ENCODE measurements at regions of chr6 and their contacts with region 1.

Region 1: DNA sequence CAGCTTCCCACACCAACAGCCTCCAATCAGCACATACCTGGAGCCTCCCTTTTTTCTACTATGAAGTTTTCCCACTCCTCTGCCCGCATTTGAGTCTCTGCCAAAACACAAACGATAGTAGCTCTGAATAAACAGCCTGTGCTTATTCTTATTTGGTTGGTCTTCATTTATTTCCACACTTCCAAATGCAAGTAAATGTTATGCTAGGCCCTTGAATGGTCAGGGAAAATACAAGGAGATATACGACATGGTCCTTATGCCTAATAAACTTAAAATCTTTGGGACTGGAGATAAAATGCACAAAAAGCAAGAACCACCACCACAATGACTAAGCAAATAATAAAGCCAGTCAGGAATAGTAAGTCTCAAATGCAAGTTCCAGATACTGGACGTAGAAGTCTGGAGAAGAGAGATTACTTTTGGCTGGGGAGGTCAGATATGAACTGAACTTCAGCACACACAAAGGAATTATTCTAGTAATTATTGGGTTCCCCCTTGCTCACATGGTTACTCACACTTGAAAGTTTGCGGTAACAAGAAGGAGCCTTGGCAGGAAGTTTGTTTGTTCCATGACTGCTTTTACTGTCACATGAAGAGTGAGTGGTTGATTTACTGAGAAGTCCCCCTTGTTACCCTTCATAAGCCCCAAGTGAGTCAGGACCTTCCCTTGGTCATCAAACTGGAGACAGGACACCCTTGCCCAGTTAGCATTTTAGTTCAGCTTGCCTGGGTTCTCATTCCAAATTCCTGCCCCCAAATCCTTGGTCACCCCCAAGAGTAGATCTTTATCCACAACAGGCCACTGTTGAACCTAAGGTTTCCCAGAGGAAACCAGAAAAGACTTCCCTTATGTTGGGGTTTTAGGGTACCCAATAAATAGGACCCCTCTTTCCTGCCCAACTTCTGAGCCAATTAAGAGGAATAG is 511.2 kb upstream of the JARID2 start:
- DNase-seq: peak; percentile 58
- H3K4me3 Mint-ChIP-seq: peak overlapping the region; percentile 36
- H3K27ac Mint-ChIP-seq: peak overlapping the region; percentile 94
- H3K4me1 Mint-ChIP-seq: peaks cover 91% of the 10 kb centered on the region
- H3K27me3 Mint-ChIP-seq: no peaks in the 10 kb centered on the region

Region 2: DNA sequence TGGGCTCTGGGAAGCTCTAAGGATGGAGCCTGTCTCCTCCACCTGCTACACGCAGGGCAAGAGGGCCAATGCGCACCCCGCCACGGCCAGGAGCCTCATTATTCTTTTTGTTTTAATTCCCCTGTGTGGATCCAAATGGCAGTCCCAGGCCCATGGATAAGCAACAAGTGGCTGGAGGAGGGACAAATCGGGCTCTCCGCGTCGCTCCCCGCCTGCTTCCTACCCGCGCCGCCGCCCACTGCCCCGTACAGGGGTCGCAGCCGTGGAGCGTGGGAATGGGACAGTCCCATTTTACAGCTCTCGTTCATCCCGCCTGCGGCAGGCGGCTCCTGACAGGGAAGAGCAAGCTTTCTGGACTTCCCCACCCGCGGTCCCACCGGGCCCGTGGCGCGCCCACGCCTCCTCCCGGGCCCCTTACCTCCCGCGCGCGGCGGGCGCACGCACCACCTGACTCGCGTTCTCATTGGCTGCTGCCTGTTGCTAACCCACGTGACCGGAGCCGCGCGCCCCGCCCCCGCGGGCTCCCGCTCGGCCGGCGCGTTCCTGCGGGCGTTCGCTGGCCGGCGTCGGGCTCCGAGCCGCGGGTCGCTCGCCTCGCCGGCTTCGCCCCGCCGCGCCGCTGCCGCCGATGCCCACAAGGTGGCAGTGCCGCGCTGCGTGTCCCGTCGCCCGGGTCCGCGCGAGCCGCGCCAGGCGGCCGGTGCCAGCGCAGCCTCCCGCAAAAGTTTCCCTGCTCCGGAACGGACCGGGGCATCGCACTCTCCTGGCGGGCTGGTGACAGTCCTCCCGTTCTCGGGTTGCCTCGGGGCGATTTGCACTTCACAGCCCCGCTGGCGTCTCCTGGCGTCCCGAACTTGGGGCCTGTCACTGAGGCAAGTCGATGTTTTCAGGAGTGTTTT is 523.8 kb before region 1 on chr6:
- intact Hi-C with region 1: loop called (anchors 2 kb)
- DNase-seq: peak; percentile 91
- H3K4me3 Mint-ChIP-seq: peak overlapping the region; percentile 80
- H3K27ac Mint-ChIP-seq: peak overlapping the region; percentile 70
- H3K4me1 Mint-ChIP-seq: peaks cover 29% of the 10 kb centered on the region
- H3K27me3 Mint-ChIP-seq: peaks cover 6% of the 10 kb centered on the region

Region 3: GRCh38 chr6:14452567-14453527 is 281.8 kb before region 1 on chr6:
- intact Hi-C with region 1: loop called (anchors 1 kb)
- DNase-seq: peak; percentile 62
- H3K4me3 Mint-ChIP-seq: peak overlapping the region; percentile 58
- H3K27ac Mint-ChIP-seq: peak overlapping the region; percentile 91
- H3K4me1 Mint-ChIP-seq: peaks cover 88% of the 10 kb centered on the region
- H3K27me3 Mint-ChIP-seq: peaks cover 2% of the 10 kb centered on the region

Region 4: GRCh38 chr6:14717307-14717706 is 17.4 kb before region 1 on chr6:
- intact Hi-C with region 1: loop called (anchors 1 kb)
- DNase-seq: no peak
- H3K4me3 Mint-ChIP-seq: peak overlapping the region; percentile 13
- H3K27ac Mint-ChIP-seq: peak overlapping the region; percentile 62
- H3K4me1 Mint-ChIP-seq: peaks cover 34% of the 10 kb centered on the region
- H3K27me3 Mint-ChIP-seq: peaks cover 2% of the 10 kb centered on the region

Region 5: DNA sequence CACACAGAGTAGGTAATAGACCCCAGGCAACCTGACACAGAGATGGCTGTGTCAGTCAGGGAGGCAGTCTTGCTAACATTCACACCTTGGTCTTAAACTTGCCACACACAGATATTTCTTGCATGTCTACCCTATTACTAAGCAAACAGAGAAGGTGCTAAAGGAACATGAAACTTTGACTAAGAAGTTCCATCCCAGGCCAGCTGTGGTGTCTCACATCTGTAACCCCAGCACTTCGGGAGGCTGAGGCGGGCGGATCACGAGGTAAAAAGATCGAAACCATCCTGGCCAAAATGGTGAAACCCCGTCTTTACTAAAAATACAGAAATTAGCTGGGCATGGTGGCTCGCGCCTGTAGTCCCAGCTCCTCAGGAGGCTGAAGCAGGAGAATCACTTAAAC is 288.8 kb after region 1 on chr6:
- intact Hi-C with region 1: loop called (anchors 1 kb)
- DNase-seq: peak; percentile 48
- H3K4me3 Mint-ChIP-seq: peak overlapping the region; percentile 31
- H3K27ac Mint-ChIP-seq: peak overlapping the region; percentile 94
- H3K4me1 Mint-ChIP-seq: peaks cover 53% of the 10 kb centered on the region
- H3K27me3 Mint-ChIP-seq: no peaks in the 10 kb centered on the region

Region 6: GRCh38 chr6:15421947-15422733 is 687.5 kb after region 1 on chr6:
- intact Hi-C with region 1: loop called (anchors 2 kb)
- DNase-seq: peak; percentile 50
- H3K4me3 Mint-ChIP-seq: peak overlapping the region; percentile 59
- H3K27ac Mint-ChIP-seq: peak overlapping the region; percentile 83
- H3K4me1 Mint-ChIP-seq: peaks cover 80% of the 10 kb centered on the region
- H3K27me3 Mint-ChIP-seq: no peaks in the 10 kb centered on the region

Measured in activated T-helper 1 cell treated with anti-CD3 and anti-CD28 coated beads, Interleukin-12 subunit alpha, Interleukin-12 subunit beta, Interleukin-2, Interleukin-4 antibody, amounts not matched to agents 30 ng/mL and 10 ng/mL and 1 ng/mL, durations not matched to agents 14 hours and 24 hours and 36 hours (primary cell).